HEK293 (cell line): ENCODE measurements at regions of chr3 and their contacts with region 1.

Region 1: DNA sequence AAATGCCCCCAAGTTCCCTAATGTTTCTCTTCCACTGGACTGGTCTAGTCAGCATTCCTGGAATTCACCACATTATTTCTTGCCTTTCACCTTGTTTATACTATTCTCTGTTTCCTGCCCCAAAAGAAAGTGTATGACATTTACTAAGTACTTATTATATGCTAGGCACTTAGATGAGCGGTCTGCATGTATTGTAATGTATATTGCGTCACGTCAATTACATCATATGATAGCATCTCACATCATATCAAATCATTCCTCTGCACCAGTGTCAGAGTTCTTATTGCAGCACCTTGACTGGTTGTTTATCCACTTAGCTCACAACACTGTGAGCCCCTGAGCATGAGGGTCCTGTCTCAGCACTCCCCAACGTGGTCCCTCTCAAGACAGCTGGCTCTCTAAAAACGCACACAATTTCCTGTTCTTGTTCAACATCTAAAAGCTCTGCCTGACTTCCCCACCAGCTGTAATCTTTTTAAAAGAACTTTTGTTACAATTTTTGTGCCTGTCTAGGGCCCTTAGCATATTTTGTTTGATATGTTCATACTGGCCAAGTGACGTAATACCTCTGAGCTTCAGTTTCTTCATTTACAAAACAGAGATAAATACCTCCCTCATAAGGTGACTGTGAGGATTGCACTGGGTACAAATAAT is 58.8 kb downstream of the ARHGAP31 start:
- H3K4me3 ChIP-seq: no peak overlapping the region
- H3K27ac ChIP-seq: no peak overlapping the region
- H3K4me1 ChIP-seq: no peaks in the 10 kb centered on the region
- CTCF ChIP-seq: no peak

Region 2: GRCh38 chr3:119279101-119279554 is 73.8 kb before region 1 on chr3:
- CTCF ChIA-PET with region 1: interaction called, 23 read pairs
- POLR2A ChIA-PET with region 1: no interaction called
- H3K4me3 ChIP-seq: no peak overlapping the region
- H3K27ac ChIP-seq: no peak overlapping the region
- H3K4me1 ChIP-seq: no peaks in the 10 kb centered on the region
- CTCF ChIP-seq: no peak